Astrocyte of the cerebellum (primary cell): ENCODE measurements at regions of chr2 and their contacts with region 1.

Region 1: DNA sequence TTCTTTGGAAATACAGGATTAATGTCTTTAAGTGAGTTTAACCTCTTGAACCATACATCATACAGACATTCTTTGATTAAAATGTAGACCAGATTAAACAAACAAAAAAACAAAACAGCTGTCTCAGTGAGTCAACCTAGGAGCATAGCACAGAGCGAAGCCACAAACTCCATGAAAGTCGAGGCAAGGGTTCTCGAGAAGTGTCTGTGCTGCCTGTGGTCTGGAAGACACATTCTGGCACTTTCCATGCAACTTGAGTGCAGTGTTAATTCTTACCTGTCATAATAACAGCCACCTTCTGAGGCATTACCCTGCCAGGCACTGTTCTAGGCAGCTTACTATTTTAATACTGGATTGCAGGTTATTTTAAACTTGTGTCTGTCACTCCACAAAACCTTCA is 435.5 kb upstream of the MMADHC start:
- DNase-seq: no peak
- H3K4me3 ChIP-seq: no peak overlapping the region
- CTCF ChIP-seq: no peak

Region 2: DNA sequence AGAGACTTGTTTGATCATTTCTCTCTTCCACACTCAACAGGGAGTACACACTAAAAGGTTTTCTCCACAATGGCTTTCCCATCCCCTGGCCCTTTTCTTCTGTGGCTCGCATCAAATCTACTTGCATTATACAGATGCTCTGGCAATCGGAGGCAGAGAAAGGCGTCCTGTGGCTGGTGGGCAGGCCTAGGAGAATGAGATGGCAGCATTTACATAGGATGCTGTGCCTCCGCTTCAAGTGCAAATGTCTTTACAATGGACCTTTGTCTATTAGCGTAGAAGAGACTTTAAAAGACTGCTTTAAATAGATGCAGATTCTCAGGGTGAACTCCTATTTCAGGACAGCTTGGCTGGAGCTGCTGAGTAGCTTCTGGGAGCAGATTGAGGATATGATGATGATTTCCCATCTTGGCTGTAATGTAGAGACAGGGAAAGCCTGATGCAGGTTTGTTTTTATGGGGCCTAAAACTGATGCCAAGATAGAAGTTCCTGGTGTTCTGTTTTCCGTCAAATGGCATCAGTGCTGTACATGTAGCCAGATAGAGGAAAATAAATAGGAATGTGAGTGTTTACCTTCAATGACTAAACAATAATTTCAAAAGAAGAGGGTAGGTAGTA is 41.0 kb after region 1 on chr2:
- in situ Hi-C with region 1: no loop called
- DNase-seq: no peak
- H3K4me3 ChIP-seq: no peak overlapping the region
- CTCF ChIP-seq: no peak

Region 3: DNA sequence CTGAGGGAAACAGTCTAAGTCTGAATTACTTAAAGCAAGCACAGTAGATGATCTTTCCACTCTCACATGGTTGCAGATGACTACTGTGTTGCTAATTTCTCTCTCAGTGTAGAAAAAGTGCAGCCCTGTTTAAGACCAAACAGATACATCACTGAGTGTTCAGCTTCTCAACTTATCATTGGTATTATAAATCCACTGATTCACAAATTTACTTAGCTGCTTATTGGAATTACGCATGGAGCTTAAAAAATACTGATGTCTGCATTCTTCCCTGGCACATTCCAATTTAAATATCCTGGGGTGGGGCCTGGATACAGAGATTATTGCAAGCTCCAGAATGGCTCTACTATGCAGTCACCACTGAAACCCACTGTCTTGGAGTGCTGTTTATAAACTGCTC is 53.2 kb after region 1 on chr2:
- in situ Hi-C with region 1: loop called (anchors 5 kb)
- DNase-seq: no peak
- H3K4me3 ChIP-seq: no peak overlapping the region
- CTCF ChIP-seq: no peak